Activated naive CD4-positive, alpha-beta T cell treated with anti-CD3 and anti-CD28 coated beads for 36 hours (primary cell): ENCODE measurements at regions of chr19 and their contacts with region 1.

Region 1: GRCh38 chr19:7145494-7146485 is 76.3 kb downstream of the ZNF557 start:
- DNase-seq: no peak
- H3K4me3 Mint-ChIP-seq: no peak overlapping the region
- H3K27ac Mint-ChIP-seq: no peak overlapping the region
- H3K4me1 Mint-ChIP-seq: no peaks in the 10 kb centered on the region
- H3K27me3 Mint-ChIP-seq: no peaks in the 10 kb centered on the region

Region 2: GRCh38 chr19:7104747-7105447 is 40.9 kb before region 1 on chr19:
- CTCF ChIA-PET with region 1: interaction called, 5 read pairs
- intact Hi-C with region 1: loop called (anchors 5 kb)
- DNase-seq: no peak
- H3K4me3 Mint-ChIP-seq: no peak overlapping the region
- H3K27ac Mint-ChIP-seq: no peak overlapping the region
- H3K4me1 Mint-ChIP-seq: peaks cover 9% of the 10 kb centered on the region
- H3K27me3 Mint-ChIP-seq: no peaks in the 10 kb centered on the region

Region 3: DNA sequence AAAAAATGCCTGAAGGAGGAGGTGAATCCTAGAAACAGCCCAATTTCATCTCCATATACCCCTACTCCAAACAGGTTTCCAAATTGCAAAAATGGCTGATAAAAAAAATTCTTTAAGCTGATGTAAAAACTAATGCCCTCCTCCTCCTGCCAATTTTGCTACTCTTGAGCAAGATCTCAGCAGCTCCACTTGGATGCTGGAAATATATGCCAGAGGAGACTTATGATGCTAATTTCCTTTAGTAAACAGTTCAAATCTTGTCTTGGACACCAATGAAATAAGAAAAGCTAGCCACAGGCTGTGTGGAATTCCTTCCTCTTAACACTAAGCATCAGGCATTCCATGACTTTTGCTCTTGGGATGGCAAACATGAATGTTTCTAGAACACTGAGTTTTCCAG is 80.9 kb after region 1 on chr19:
- CTCF ChIA-PET with region 1: no interaction called
- intact Hi-C with region 1: no loop called
- DNase-seq: no peak
- H3K4me3 Mint-ChIP-seq: no peak overlapping the region
- H3K27ac Mint-ChIP-seq: no peak overlapping the region
- H3K4me1 Mint-ChIP-seq: peaks cover 8% of the 10 kb centered on the region
- H3K27me3 Mint-ChIP-seq: no peaks in the 10 kb centered on the region

Region 4: GRCh38 chr19:7326105-7326877 is 180.5 kb after region 1 on chr19:
- CTCF ChIA-PET with region 1: interaction called, 12 read pairs
- intact Hi-C with region 1: loop called (anchors 2 kb)
- DNase-seq: peak; percentile 77
- H3K4me3 Mint-ChIP-seq: no peak overlapping the region
- H3K27ac Mint-ChIP-seq: no peak overlapping the region
- H3K4me1 Mint-ChIP-seq: no peaks in the 10 kb centered on the region
- H3K27me3 Mint-ChIP-seq: no peaks in the 10 kb centered on the region